Sciatic nerve (tissue), 2 donors: ENCODE measurements at regions of chr16 and their contacts with region 1.

Region 1: GRCh38 chr16:13811834-13812233 is 108.1 kb upstream of the ERCC4 start:
- DNase-seq: no peak
- ATAC-seq: no peak

Region 2: DNA sequence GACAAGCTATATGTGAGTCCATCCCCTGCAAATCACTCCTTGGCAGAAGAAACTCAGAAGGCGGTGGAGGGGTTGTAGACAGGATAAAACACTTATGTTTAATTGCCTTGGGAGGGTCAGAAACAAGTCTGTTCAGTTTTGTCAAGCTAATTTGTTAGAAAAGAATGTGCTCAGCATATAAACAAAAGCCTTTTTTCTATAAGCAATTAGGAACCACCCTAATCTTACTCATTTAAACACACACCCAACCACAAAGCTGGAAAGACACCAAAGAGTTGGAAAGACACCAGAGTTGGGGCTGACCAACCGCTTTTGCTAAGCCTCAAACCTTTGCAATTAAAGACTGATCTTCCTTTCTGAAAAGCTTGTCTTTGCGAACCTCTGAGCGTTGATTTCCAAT is 331.0 kb before region 1 on chr16:
- intact Hi-C with region 1: no loop called
- DNase-seq: no peak
- ATAC-seq: no peak

Region 3: GRCh38 chr16:13742928-13743327 is 68.9 kb before region 1 on chr16:
- intact Hi-C with region 1: loop called (anchors 2 kb)
- DNase-seq: no peak
- ATAC-seq: no peak